Cardiac septum (tissue), 1 donor: ENCODE measurements at regions of chr5 and their contacts with region 1.

Region 1: GRCh38 chr5:174317259-174317894 is 271.9 kb downstream of the NSG2 start:
- DNase-seq: peak; percentile 74

Region 2: GRCh38 chr5:174045470-174046025 is 271.8 kb before region 1 on chr5 and contains the start of gene NSG2:
- intact Hi-C with region 1: loop called (anchors 2 kb)
- DNase-seq: peak; percentile 88
- total RNA-seq, gene NSG2: 1.5 TPM

Region 3: GRCh38 chr5:174355208-174355612 is 37.8 kb after region 1 on chr5:
- intact Hi-C with region 1: no loop called
- DNase-seq: no peak

Region 4: GRCh38 chr5:174816860-174817259 is 499.5 kb after region 1 on chr5:
- intact Hi-C with region 1: no loop called
- DNase-seq: no peak